ENCODE measurements at regions of chr9 and their contacts with region 1.

Region 1: DNA sequence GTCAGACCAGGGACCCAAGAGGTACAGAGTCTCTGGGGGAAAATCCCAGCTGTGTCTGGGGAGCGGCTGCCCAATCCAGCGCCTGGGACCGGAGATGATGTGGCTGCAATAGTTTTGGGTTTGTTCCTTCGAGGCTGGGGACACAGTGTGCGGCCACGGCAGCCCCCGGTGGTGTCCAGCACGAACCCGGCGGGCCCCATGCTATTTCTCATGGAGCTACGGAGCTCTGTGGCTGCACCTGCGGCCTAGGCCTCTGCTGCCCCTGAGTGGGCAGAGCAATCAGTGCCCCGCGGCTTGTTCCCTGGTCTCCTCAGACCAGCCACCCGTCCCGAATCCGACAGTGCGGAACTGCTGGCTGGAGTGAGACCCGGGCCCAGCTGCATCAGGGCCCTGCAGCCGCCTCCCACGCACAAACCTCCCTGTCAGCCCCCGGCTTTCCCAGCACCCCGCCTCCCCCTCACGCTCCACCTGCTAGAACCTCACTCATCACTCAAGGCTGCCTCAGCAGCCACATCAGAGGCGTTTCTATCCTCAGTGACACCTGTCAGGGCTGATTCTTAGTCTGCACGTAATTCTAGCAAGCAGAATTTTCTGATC is 29.0 kb downstream of the SARDH start:
- DNase-seq: peak; percentile 31
- ATAC-seq: peak; percentile 94
- H3K4me3 Mint-ChIP-seq: peak overlapping the region; percentile 13
- H3K27ac Mint-ChIP-seq: no peak overlapping the region
- H3K4me1 Mint-ChIP-seq: peaks cover 31% of the 10 kb centered on the region
- H3K27me3 Mint-ChIP-seq: peaks cover 7% of the 10 kb centered on the region
- CTCF ChIP-seq: no peak

Region 2: GRCh38 chr9:133375724-133376654 is 333.1 kb before region 1 on chr9 and contains the starts of genes STKLD1 and SURF4:
- CTCF ChIA-PET with region 1: no interaction called
- POLR2A ChIA-PET with region 1: no interaction called
- intact Hi-C with region 1: no loop called
- DNase-seq: peak; percentile 99
- ATAC-seq: peak; percentile 96
- H3K4me3 Mint-ChIP-seq: peak within 1 kb of the TSS; percentile 91
- H3K27ac Mint-ChIP-seq: peak within 1 kb of the TSS; percentile 74
- H3K4me1 Mint-ChIP-seq: peaks cover 39% of the 10 kb centered on the region
- H3K27me3 Mint-ChIP-seq: no peaks in the 10 kb centered on the region
- CTCF ChIP-seq: no peak
- total RNA-seq, gene STKLD1: 0.37 and 0.44 TPM in 2 replicates
- total RNA-seq, gene SURF4: 57.0 and 58.2 TPM in 2 replicates

Region 3: GRCh38 chr9:133734590-133735414 is 25.7 kb after region 1 on chr9:
- CTCF ChIA-PET with region 1: no interaction called
- POLR2A ChIA-PET with region 1: no interaction called
- intact Hi-C with region 1: loop called (anchors 2 kb)
- DNase-seq: no peak
- ATAC-seq: peak; percentile 61
- H3K4me3 Mint-ChIP-seq: peak overlapping the region; percentile 59
- H3K27ac Mint-ChIP-seq: peak overlapping the region; percentile 79
- H3K4me1 Mint-ChIP-seq: peaks cover 34% of the 10 kb centered on the region
- H3K27me3 Mint-ChIP-seq: peaks cover 4% of the 10 kb centered on the region
- CTCF ChIP-seq: no peak

Region 4: DNA sequence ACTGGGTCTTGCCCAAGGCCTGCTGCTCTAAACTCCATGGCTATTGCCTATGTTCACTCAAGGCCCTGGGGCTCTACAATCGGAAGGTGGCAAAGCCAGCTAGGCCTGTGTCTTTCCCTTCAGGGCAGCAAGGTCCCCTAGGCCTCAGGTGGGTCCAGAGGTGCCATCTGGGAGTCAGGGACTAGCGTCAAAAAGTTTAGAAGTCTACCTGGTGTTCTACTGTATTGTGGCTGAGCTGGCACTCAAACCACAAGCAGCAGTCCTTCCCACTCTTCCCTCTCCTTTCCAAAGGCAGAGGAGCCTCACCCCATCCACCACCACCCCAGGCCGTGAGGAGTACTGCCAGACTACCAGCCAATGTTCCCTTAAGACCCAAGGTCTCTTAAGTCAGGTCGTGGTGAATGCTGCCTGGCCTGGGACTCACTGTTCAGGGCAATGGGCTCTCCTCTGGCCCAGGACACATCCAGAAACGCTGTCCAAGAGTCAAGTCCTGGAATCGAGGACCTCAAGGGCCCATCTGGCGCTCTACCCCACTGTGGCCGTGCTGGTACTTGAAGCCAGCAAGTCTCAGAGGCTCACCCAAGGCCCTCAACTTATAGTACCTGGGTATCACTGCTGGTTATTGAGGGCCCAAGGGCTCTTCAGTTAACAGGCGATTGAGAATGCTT is 42.0 kb after region 1 on chr9:
- CTCF ChIA-PET with region 1: no interaction called
- POLR2A ChIA-PET with region 1: no interaction called
- intact Hi-C with region 1: no loop called
- DNase-seq: no peak
- ATAC-seq: no peak
- H3K4me3 Mint-ChIP-seq: no peak overlapping the region
- H3K27ac Mint-ChIP-seq: no peak overlapping the region
- H3K4me1 Mint-ChIP-seq: peaks cover 3% of the 10 kb centered on the region
- H3K27me3 Mint-ChIP-seq: peaks cover 24% of the 10 kb centered on the region
- CTCF ChIP-seq: no peak

Region 5: DNA sequence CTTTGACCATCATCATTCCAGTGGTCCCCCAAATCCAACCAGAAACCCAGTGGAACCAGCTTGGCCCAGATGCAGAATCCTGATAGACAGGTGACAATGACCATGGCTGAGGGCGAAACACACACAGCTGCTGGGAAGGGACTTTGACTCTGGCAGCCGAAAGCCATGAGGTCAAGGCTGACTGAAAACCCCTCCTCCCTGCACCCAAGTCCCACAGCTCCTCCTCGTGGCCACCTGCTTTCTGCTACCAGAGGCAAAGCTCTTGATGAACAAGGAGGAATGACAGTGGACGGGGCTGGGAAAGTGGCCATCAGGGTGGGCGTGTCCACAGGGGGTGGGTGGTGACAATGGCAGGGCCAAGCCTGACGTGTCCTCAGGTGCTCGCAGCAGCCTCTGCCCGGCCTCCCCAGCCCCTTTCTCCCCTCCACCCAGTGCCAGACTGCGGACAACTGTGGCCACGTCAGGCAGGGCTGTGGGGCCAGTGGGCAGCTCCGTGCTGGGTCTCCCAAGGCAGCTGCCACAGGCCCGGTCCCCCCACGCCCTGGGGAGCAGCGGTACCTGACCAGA is 59.8 kb after region 1 on chr9:
- CTCF ChIA-PET with region 1: no interaction called
- POLR2A ChIA-PET with region 1: no interaction called
- intact Hi-C with region 1: no loop called
- DNase-seq: no peak
- ATAC-seq: no peak
- H3K4me3 Mint-ChIP-seq: no peak overlapping the region
- H3K27ac Mint-ChIP-seq: no peak overlapping the region
- H3K4me1 Mint-ChIP-seq: no peaks in the 10 kb centered on the region
- H3K27me3 Mint-ChIP-seq: no peaks in the 10 kb centered on the region
- CTCF ChIP-seq: no peak

Region 6: GRCh38 chr9:133803028-133803585 is 94.0 kb after region 1 on chr9:
- CTCF ChIA-PET with region 1: no interaction called
- POLR2A ChIA-PET with region 1: no interaction called
- intact Hi-C with region 1: no loop called
- DNase-seq: no peak
- ATAC-seq: no peak
- H3K4me3 Mint-ChIP-seq: no peak overlapping the region
- H3K27ac Mint-ChIP-seq: no peak overlapping the region
- H3K4me1 Mint-ChIP-seq: peaks cover 2% of the 10 kb centered on the region
- H3K27me3 Mint-ChIP-seq: no peaks in the 10 kb centered on the region
- CTCF ChIP-seq: no peak